GM12878 (cell line): ENCODE measurements at regions of chr10 and their contacts with region 1.

Region 1: DNA sequence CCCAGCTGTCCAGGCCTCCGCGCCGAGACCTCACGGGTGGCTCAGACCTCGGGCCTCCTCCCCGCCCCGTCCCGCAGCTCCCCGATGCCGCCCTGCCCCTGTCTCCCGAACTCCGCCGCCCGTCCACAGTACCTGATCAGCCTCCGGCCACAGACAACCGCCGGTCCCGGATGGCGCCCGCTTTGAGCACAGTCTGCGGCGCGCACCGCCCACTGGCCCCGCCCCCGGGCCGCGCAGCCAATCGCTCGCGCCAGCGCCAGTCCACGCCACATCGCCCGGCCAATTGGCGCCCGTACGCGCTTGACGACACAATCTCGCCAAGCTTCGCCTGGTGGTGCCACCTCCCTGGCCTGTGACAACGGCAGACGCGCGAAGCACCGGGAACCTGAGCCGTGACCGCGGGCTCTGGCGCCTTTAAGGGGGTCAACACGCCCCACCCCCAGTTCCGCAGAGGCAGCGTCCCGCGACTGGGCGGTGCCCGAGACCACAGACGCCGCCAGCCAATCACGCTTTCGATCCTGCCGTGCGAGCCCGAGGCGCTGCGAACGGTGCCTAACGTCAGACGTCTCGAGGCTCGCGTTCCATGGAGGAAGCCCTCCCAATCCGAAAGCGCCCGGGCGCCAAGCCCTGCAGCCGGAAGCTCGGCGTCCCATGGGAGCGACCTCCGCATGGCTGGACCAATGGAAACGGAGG is at the start of gene IDI1:
- DNase-seq: peak; percentile 96
- ATAC-seq: peak; percentile 87
- H3K4me3 ChIP-seq: peak within 1 kb of the TSS; percentile 95
- H3K27ac ChIP-seq: peak within 1 kb of the TSS; percentile 96
- H3K4me1 ChIP-seq: peaks cover 5% of the 10 kb centered on the region
- H3K27me3 ChIP-seq: no peaks in the 10 kb centered on the region
- CTCF ChIP-seq: 0 out of 6 replicates have a peak, but pooled peaks of 1 of the 3 experiments have one; percentile 3
- EP300 ChIP-seq: peak; percentile 62 to 65; a peak in 3 of 4 replicates
- POLR2A ChIP-seq: peak; percentile 99
- RAD21 ChIP-seq: no peak
- polyA plus RNA-seq, gene IDI1: 156 to 223 TPM

Region 2: GRCh38 chr10:931416-932318 is 117.2 kb before region 1 on chr10 and contains the start of gene LARP4B:
- CTCF ChIA-PET with region 1: interaction called, 3 read pairs
- POLR2A ChIA-PET with region 1: interaction called, 19 read pairs
- RAD21 ChIA-PET with region 1: interaction called, 7 read pairs
- SMC1A ChIA-PET with region 1: interaction called, 3 read pairs
- in situ Hi-C with region 1: no loop called
- intact Hi-C with region 1: loop called (anchors 2 kb)
- DNase-seq: peak; percentile 88
- ATAC-seq: peak; percentile 93
- H3K4me3 ChIP-seq: peak within 1 kb of the TSS; percentile 79
- H3K27ac ChIP-seq: peak within 1 kb of the TSS; percentile 83
- H3K4me1 ChIP-seq: peaks cover 18% of the 10 kb centered on the region
- H3K27me3 ChIP-seq: no peaks in the 10 kb centered on the region
- CTCF ChIP-seq: no peak
- EP300 ChIP-seq: no peak
- POLR2A ChIP-seq: peak; percentile 84
- RAD21 ChIP-seq: no peak
- polyA plus RNA-seq, gene LARP4B: 10.5 to 12.1 TPM

Region 3: DNA sequence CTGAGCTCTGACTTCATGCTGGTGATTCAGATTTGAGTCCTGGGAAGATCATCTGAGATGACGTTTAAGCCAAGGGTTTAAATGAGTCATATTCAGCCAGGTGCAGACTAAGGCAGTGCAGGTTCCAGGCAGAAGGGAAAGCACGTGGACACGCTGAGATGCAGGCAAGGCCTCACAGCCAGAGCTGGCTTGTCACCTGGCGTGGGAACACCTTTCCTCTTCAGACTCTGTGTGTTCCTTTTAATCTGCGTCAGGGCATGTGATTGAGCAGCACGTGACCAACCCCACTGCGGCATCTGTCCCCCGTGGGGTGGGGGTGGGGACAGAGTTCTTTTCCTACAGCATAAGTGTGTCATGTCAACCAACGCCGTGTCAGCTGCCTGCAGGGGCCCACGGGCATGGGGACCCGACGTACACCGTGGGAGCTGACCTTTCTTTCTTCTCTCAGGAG is 12.5 kb before region 1 on chr10:
- CTCF ChIA-PET with region 1: no interaction called
- POLR2A ChIA-PET with region 1: interaction called, 16 read pairs
- RAD21 ChIA-PET with region 1: interaction called, 4 read pairs
- SMC1A ChIA-PET with region 1: interaction called, 4 read pairs
- in situ Hi-C with region 1: no loop called
- intact Hi-C with region 1: no loop called
- DNase-seq: no peak
- ATAC-seq: peak; percentile 80
- H3K4me3 ChIP-seq: no peak overlapping the region
- H3K27ac ChIP-seq: no peak overlapping the region
- H3K4me1 ChIP-seq: peaks cover 4% of the 10 kb centered on the region; the same call in 1 of the 2 replicates
- H3K27me3 ChIP-seq: no peaks in the 10 kb centered on the region
- CTCF ChIP-seq: no peak
- EP300 ChIP-seq: no peak
- POLR2A ChIP-seq: no peak
- RAD21 ChIP-seq: no peak